ENCODE measurements at regions of chr15 and their contacts with region 1.

Region 1: GRCh38 chr15:82663186-82663600 is 16.0 kb upstream of the CPEB1 start:
- DNase-seq: peak; percentile 57
- ATAC-seq: peak; percentile 30 to 55

Region 2: GRCh38 chr15:82585072-82585471 is 78.1 kb before region 1 on chr15:
- intact Hi-C with region 1: loop called in 1 of 2 experiments (anchors 10 kb)
- DNase-seq: no peak
- ATAC-seq: no peak

Region 3: DNA sequence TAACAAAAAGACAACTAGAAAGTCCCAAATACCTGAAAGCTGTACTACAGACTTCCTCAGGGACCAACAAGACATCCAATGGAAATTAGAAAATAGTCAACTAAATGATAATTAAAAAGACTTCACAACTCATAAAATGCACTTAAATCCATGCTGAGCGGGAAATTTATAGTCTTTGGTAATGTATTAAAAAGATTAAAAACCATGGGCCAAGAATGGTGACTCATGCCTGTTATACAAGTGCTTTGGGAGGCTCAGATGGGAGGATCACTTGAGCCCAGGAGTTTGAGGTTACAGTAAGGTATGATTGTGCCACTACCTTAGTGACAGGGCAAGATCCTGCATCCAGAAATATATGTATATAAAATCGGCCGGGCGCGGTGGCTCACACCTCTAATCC is 61.0 kb before region 1 on chr15:
- intact Hi-C with region 1: no loop called
- DNase-seq: no peak
- ATAC-seq: no peak

Region 4: DNA sequence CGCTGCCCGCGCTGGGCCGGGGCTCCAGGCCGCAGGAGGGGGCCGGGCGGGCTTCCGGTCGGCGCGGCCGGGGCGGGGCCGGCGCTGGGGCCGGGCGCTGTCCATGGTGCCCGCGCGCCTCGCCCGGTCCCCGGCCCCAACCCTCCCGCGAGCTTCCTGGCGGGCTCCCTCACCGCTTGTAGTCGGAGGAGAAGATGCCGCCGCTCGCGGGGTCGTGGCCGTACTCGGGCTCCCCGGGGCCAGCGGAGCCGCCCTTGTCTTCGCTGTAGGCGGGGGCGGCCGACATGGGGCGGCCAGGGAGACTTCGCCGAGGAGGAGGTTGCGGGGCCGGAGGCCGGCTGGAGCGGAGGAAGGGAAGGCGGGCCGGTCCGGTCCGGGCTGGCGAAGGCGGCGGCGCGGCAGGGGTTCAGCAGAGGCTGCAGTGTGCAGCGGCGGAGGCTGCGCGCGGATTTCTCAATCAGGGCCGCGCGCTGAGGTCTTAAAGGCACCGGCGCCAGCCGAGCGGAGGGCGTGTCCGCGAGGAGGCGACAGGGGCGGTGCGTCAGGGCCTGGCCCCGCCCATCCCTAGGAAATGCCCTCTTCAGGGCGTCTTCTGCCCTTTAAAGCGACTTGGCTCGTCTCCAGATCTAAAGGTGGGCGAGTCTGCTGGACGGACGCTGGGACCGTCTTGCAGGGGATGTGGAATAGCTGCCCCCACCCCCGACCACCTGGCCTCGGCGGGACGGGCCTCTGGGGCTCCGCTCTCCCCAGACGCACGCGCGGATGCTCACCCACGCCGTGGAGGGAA is 46.4 kb after region 1 on chr15 and contains the start of gene AP3B2:
- intact Hi-C with region 1: no loop called
- DNase-seq: peak; percentile 75
- ATAC-seq: peak; percentile 99
- total RNA-seq, gene AP3B2: 0.34 to 1.4 TPM

Region 5: GRCh38 chr15:82771789-82772607 is 108.8 kb after region 1 on chr15:
- intact Hi-C with region 1: no loop called
- DNase-seq: no peak
- ATAC-seq: no peak

Measured in left cardiac atrium (tissue), 4 donors.